Activated CD4-positive, alpha-beta T cell treated with anti-CD3 and anti-CD28 coated beads, Interleukin-2, amount 10 ng/mL, durations not matched to agents 24 days and 14 days (primary cell): ENCODE measurements at regions of chr11 and their contacts with region 1.

Region 1: DNA sequence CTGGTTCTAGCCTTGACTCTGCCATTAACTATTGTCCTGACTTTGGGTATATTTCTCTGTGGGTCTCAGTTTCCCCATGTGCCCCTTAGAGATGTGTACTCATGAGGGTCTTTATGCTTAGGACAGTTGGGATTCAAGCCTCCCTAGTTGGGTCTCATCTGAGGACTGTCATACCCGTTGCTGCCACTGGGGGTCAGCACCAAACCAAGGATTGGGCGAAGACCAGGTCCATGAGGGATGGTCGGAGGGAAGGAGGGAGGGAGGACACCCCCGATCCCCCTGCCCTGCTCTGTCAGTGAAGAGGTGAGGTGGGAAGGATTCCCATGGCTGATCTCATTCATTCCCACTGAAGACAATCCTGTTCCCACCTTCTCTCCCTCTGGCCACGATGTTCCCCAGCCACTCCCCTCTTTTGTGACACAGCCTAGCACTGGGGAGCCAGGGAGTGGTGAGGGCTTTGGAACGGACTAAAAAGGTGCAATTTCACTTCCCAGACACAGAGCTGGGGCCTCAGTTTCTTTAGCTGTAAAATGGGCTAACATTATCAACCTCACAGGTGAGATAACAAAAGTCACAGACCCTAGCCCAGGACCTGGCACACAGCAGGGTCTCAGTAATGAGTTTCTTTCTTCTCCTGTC is 12.4 kb upstream of the KLHL35 start:
- DNase-seq: peak; percentile 92
- H3K4me3 Mint-ChIP-seq: no peak overlapping the region
- H3K27ac Mint-ChIP-seq: no peak overlapping the region
- H3K4me1 Mint-ChIP-seq: no peaks in the 10 kb centered on the region
- H3K27me3 Mint-ChIP-seq: peaks cover 2% of the 10 kb centered on the region

Region 2: GRCh38 chr11:75532200-75533048 is 87.0 kb after region 1 on chr11:
- intact Hi-C with region 1: loop called (anchors 1 kb)
- DNase-seq: peak; percentile 95
- H3K4me3 Mint-ChIP-seq: peak overlapping the region; percentile 31
- H3K27ac Mint-ChIP-seq: no peak overlapping the region
- H3K4me1 Mint-ChIP-seq: peaks cover 30% of the 10 kb centered on the region
- H3K27me3 Mint-ChIP-seq: peaks cover 11% of the 10 kb centered on the region